ENCODE measurements at regions of chr2 and their contacts with region 1.

Region 1: DNA sequence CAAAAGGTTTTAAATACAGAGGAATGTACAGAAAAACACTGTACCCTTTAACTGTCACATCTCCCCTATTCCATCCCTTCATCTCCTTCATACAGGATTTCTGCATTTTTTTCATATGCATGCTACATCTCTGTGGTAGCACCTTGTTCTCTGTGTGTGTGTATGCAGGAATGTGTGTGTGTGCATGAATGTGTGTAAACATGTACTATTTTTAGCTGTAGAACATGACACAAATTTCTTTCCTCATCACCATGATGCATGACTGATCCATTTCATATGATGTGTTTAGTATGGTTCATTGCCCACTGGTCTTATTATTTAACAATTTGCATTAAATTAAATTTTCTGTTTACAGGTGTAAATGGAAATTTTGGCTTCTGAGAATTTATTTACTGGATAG is 21.5 kb upstream of the ZEB2 start:
- DNase-seq: no peak
- H3K4me3 ChIP-seq: no peak overlapping the region
- H3K27ac ChIP-seq: no peak overlapping the region
- H3K4me1 ChIP-seq: peaks cover 3% of the 10 kb centered on the region
- CTCF ChIP-seq: no peak

Region 2: GRCh38 chr2:144510294-144510991 is 31.0 kb before region 1 on chr2:
- CTCF ChIA-PET with region 1: no interaction called
- POLR2A ChIA-PET with region 1: no interaction called
- intact Hi-C with region 1: no loop called
- DNase-seq: no peak
- H3K4me3 ChIP-seq: no peak overlapping the region
- H3K27ac ChIP-seq: no peak overlapping the region
- H3K4me1 ChIP-seq: peaks cover 34% of the 10 kb centered on the region
- CTCF ChIP-seq: no peak

Region 3: DNA sequence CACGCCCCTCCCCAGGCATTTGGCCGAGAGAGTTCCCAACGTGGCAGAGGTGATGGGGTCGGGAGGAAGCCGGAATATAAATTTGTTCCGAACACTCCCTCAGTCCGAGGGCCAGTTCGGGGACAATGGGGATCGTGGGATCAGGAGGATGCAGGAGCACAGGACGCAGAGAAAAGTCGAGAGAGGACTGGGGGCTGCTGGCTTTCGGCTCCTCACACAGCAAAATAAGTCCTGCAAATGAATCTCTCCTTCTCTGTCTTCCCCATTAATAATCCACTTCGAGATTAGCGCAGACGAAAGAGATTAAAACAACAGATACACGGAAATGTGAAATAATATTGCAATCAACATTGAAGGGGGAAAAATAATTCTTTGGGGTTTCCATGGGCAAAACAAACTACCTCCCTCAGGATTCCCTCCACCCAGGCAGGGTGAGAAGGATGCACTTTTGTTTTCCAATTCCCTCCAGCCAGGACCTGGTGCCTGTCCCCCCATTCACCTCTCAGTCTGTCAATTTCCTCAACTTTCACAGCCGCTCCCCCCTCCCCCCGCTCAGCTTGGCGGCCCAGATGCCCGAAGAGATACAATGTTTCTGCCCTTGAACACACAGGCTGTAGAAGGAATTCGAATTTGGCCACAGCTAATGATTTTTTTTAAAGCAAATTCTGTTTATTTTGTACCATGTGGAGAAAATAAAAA is 18.4 kb before region 1 on chr2:
- CTCF ChIA-PET with region 1: interaction called, 11 read pairs
- POLR2A ChIA-PET with region 1: interaction called, 5 read pairs
- intact Hi-C with region 1: no loop called
- DNase-seq: no peak
- H3K4me3 ChIP-seq: peak overlapping the region; percentile 68
- H3K27ac ChIP-seq: no peak overlapping the region
- H3K4me1 ChIP-seq: peaks cover 57% of the 10 kb centered on the region
- CTCF ChIP-seq: no peak

Region 4: DNA sequence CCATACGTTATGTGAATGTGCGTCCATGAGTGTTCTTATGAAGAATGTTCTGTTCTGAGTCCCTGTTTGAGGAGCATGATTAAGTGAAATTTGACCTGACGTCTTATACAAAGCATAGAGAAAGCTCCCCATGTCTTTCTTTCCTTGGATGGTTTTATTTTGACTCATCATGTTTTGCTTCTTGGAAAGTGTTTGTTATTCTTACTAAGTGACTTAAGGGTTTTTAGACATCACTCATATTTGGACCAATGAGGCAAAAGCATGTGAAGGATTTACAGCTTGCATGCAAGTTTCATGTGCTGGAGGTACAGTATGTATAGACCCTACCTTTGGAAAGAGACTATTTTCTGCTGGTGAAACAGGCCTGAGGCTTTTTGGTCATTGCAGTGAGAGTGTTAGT is 12.0 kb after region 1 on chr2:
- CTCF ChIA-PET with region 1: no interaction called
- POLR2A ChIA-PET with region 1: interaction called, 15 read pairs
- intact Hi-C with region 1: no loop called
- DNase-seq: no peak
- H3K4me3 ChIP-seq: no peak overlapping the region
- H3K27ac ChIP-seq: no peak overlapping the region
- H3K4me1 ChIP-seq: peaks cover 16% of the 10 kb centered on the region
- CTCF ChIP-seq: no peak

Region 5: DNA sequence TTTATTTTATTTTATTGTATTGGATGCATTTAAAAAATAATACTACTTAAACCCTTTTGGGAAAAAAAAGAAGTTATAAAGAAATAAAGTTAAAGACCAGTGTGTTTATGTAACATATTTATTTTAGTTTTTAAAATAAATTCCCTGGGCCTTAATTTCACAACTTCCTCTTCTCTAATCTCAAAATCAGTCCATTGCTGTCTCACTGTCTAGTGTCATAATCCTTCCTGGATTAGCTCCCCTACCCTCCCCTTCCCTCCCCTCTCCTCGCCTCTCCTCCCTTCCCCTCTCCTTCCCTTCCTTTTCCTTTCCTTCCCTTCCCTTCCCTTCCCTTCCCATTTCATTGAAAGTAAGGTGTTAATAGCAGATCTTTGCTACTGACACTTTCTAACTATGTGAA is 18.9 kb after region 1 on chr2:
- CTCF ChIA-PET with region 1: no interaction called
- POLR2A ChIA-PET with region 1: interaction called, 13 read pairs
- intact Hi-C with region 1: no loop called
- DNase-seq: no peak
- H3K4me3 ChIP-seq: no peak overlapping the region
- H3K27ac ChIP-seq: no peak overlapping the region
- H3K4me1 ChIP-seq: peaks cover 31% of the 10 kb centered on the region
- CTCF ChIP-seq: no peak

Region 6: GRCh38 chr2:144607891-144608521 is 66.6 kb after region 1 on chr2:
- CTCF ChIA-PET with region 1: no interaction called
- POLR2A ChIA-PET with region 1: no interaction called
- intact Hi-C with region 1: no loop called
- DNase-seq: no peak
- H3K4me3 ChIP-seq: no peak overlapping the region
- H3K27ac ChIP-seq: no peak overlapping the region
- H3K4me1 ChIP-seq: peaks cover 40% of the 10 kb centered on the region
- CTCF ChIP-seq: no peak

Region 7: GRCh38 chr2:144718376-144718775 is 177.0 kb after region 1 on chr2:
- CTCF ChIA-PET with region 1: no interaction called
- POLR2A ChIA-PET with region 1: no interaction called
- intact Hi-C with region 1: no loop called
- DNase-seq: peak; percentile 13
- H3K4me3 ChIP-seq: no peak overlapping the region
- H3K27ac ChIP-seq: no peak overlapping the region
- H3K4me1 ChIP-seq: no peaks in the 10 kb centered on the region
- CTCF ChIP-seq: no peak

Region 8: DNA sequence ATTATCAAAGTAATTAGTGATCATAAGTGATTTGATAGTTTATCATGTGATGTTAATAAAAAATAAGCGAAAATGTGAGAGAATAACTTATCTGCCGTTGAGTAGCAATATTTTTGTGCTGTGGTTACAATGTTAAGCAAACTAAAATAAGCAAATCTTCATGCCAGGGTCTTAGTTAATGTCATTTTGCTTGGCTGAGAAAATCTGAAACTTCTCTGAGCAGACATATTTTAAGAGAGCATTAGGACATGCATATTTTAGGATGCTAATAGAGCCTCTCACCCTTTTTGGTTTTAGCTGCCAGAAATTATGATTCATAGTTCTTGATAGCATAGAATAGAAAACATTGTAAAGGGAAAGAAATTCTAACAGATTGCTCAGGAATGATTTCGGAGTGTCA is 212.0 kb after region 1 on chr2:
- CTCF ChIA-PET with region 1: no interaction called
- POLR2A ChIA-PET with region 1: no interaction called
- intact Hi-C with region 1: no loop called
- DNase-seq: no peak
- H3K4me3 ChIP-seq: no peak overlapping the region
- H3K27ac ChIP-seq: no peak overlapping the region
- H3K4me1 ChIP-seq: no peaks in the 10 kb centered on the region
- CTCF ChIP-seq: no peak

Measured in OCI-LY7 (cell line).